ENCODE measurements at regions of chr6 and their contacts with region 1.

Region 1: GRCh38 chr6:107674995-107675738 is 148.9 kb downstream of the SCML4 start:
- DNase-seq: peak; percentile 78 to 79
- ATAC-seq: peak; percentile 99 to 100
- H3K4me3 ChIP-seq: no peak overlapping the region
- H3K27ac ChIP-seq: peak overlapping the region; percentile 54 to 86; a peak in 5 of 6 replicates
- H3K4me1 ChIP-seq: no peaks in the 10 kb centered on the region
- CTCF ChIP-seq: peak; percentile 88
- EP300 ChIP-seq: no peak
- POLR2A ChIP-seq: no peak
- RAD21 ChIP-seq: peak; percentile 79 to 86

Region 2: GRCh38 chr6:107704347-107705013 is 29.3 kb after region 1 on chr6:
- CTCF ChIA-PET with region 1: interaction called, 21 read pairs
- POLR2A ChIA-PET with region 1: no interaction called
- DNase-seq: peak; percentile 9 to 14
- ATAC-seq: peak in 1 of 2 experiments; percentile 60; a peak in 3 of 6 replicates
- H3K4me3 ChIP-seq: no peak overlapping the region
- H3K27ac ChIP-seq: no peak overlapping the region
- H3K4me1 ChIP-seq: no peaks in the 10 kb centered on the region
- CTCF ChIP-seq: peak; percentile 67
- EP300 ChIP-seq: no peak
- POLR2A ChIP-seq: no peak
- RAD21 ChIP-seq: peak; percentile 45 to 57